ENCODE measurements at regions of chr17 and their contacts with region 1.

Region 1: DNA sequence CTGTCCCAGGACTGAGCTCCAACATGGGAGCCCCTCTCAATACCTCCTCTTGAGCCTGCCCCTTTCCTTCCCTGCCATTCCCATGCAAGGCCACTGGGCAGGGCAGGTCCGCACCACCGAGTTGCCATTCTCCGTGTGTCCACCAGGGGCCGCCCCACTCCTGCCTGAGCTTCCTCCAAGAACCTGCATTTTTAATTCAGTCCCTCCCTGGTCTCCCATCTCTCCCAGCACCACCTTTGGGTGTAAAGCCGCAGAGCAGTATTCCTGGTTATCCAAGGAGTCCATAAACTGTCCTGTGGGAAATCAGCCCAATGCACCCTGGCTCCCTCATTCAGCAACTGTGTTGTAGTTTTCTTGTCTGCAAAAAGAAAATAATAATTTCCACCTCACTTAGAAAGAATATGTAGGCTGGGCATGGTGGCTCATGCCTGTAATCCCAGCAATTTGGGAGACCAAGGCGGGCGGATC is 15.9 kb upstream of the ANKRD40CL start:
- DNase-seq: peak; percentile 31
- ATAC-seq: peak; percentile 98
- H3K4me3 ChIP-seq: no peak overlapping the region
- H3K27ac ChIP-seq: no peak overlapping the region
- H3K4me1 ChIP-seq: no peaks in the 10 kb centered on the region; the same call in 1 of the 2 replicates
- H3K27me3 ChIP-seq: no peaks in the 10 kb centered on the region
- CTCF ChIP-seq: peak; percentile 99 to 100 (median 99); a peak in 5 of 6 replicates
- EP300 ChIP-seq: no peak
- POLR2A ChIP-seq: no peak
- RAD21 ChIP-seq: peak; percentile 98

Region 2: GRCh38 chr17:50707289-50708049 is 75.8 kb before region 1 on chr17 and contains the start of gene ANKRD40:
- CTCF ChIA-PET with region 1: no interaction called
- POLR2A ChIA-PET with region 1: no interaction called
- RAD21 ChIA-PET with region 1: no interaction called
- SMC1A ChIA-PET with region 1: no interaction called
- in situ Hi-C with region 1: no loop called
- intact Hi-C with region 1: no loop called
- DNase-seq: peak; percentile 67
- ATAC-seq: peak; percentile 78
- H3K4me3 ChIP-seq: peak within 1 kb of the TSS; percentile 81
- H3K27ac ChIP-seq: peak within 1 kb of the TSS; percentile 86
- H3K4me1 ChIP-seq: peaks cover 9% of the 10 kb centered on the region
- H3K27me3 ChIP-seq: no peaks in the 10 kb centered on the region
- CTCF ChIP-seq: no peak
- EP300 ChIP-seq: 0 out of 4 replicates have a peak, but pooled peaks of 1 of the 2 experiments have one; percentile 9
- POLR2A ChIP-seq: peak; percentile 80
- RAD21 ChIP-seq: no peak
- polyA plus RNA-seq, gene ANKRD40: 6.7 to 6.9 TPM

Region 3: GRCh38 chr17:50765454-50766221 is 17.6 kb before region 1 on chr17:
- CTCF ChIA-PET with region 1: interaction called, 25 read pairs
- POLR2A ChIA-PET with region 1: interaction called, 3 read pairs
- RAD21 ChIA-PET with region 1: no interaction called
- SMC1A ChIA-PET with region 1: interaction called, 7 read pairs
- in situ Hi-C with region 1: no loop called
- intact Hi-C with region 1: no loop called
- DNase-seq: peak; percentile 37
- ATAC-seq: peak; percentile 81
- H3K4me3 ChIP-seq: no peak overlapping the region
- H3K27ac ChIP-seq: 0 out of 2 replicates have a peak overlapping the region, but pooled peaks have one; percentile 17
- H3K4me1 ChIP-seq: peaks cover 16% of the 10 kb centered on the region
- H3K27me3 ChIP-seq: no peaks in the 10 kb centered on the region
- CTCF ChIP-seq: no peak
- EP300 ChIP-seq: no peak
- POLR2A ChIP-seq: no peak
- RAD21 ChIP-seq: no peak

Region 4: GRCh38 chr17:50771991-50772785 is 11.0 kb before region 1 on chr17:
- CTCF ChIA-PET with region 1: interaction called, 14 read pairs
- POLR2A ChIA-PET with region 1: interaction called, 3 read pairs
- RAD21 ChIA-PET with region 1: no interaction called
- SMC1A ChIA-PET with region 1: interaction called, 7 read pairs
- in situ Hi-C with region 1: no loop called
- intact Hi-C with region 1: no loop called
- DNase-seq: no peak
- ATAC-seq: peak; percentile 34; the same call in 1 of the 3 replicates
- H3K4me3 ChIP-seq: no peak overlapping the region
- H3K27ac ChIP-seq: no peak overlapping the region
- H3K4me1 ChIP-seq: peaks cover 8% of the 10 kb centered on the region
- H3K27me3 ChIP-seq: no peaks in the 10 kb centered on the region
- CTCF ChIP-seq: no peak
- EP300 ChIP-seq: no peak
- POLR2A ChIP-seq: no peak
- RAD21 ChIP-seq: no peak

Region 5: DNA sequence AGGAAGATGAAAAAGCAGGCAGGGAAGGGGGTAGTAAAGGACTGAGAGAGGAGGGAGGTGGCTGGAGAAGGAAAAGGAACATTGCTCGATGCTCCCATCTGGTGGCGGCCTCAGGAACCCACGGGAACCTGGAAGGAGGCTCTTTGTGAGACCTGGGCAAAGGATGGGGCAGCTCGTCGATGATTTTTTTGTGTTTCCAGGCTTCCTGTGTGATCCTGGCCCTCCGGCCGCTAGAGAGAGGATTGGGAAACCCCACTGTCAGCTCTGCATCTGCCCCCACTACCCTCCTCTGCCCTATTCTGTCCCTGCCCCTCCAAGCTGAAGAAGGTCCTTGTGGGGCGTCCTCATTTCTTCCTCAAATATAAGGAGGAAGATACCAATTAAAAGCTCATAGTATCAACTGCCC is 58.7 kb after region 1 on chr17:
- CTCF ChIA-PET with region 1: interaction called, 84 read pairs
- POLR2A ChIA-PET with region 1: no interaction called
- RAD21 ChIA-PET with region 1: interaction called, 18 read pairs
- SMC1A ChIA-PET with region 1: interaction called, 17 read pairs
- in situ Hi-C with region 1: loop called (anchors 5 kb)
- intact Hi-C with region 1: loop called (anchors 1 kb)
- DNase-seq: no peak
- ATAC-seq: peak; percentile 90
- H3K4me3 ChIP-seq: no peak overlapping the region
- H3K27ac ChIP-seq: no peak overlapping the region
- H3K4me1 ChIP-seq: no peaks in the 10 kb centered on the region
- H3K27me3 ChIP-seq: no peaks in the 10 kb centered on the region; a peak in 2 of 4 replicates
- CTCF ChIP-seq: peak; percentile 74 to 88 (median 83); a peak in 5 of 6 replicates
- EP300 ChIP-seq: no peak
- POLR2A ChIP-seq: no peak
- RAD21 ChIP-seq: peak; percentile 85

Region 6: GRCh38 chr17:50949989-50950881 is 167.0 kb after region 1 on chr17:
- CTCF ChIA-PET with region 1: interaction called, 12 read pairs
- POLR2A ChIA-PET with region 1: no interaction called
- RAD21 ChIA-PET with region 1: interaction called, 4 read pairs
- SMC1A ChIA-PET with region 1: interaction called, 12 read pairs
- in situ Hi-C with region 1: loop called (anchors 10 kb)
- intact Hi-C with region 1: no loop called
- DNase-seq: no peak
- ATAC-seq: peak; percentile 95
- H3K4me3 ChIP-seq: no peak overlapping the region
- H3K27ac ChIP-seq: no peak overlapping the region
- H3K4me1 ChIP-seq: peaks cover 20% of the 10 kb centered on the region
- H3K27me3 ChIP-seq: no peaks in the 10 kb centered on the region
- CTCF ChIP-seq: peak; percentile 66 to 76 (median 66)
- EP300 ChIP-seq: no peak
- POLR2A ChIP-seq: no peak
- RAD21 ChIP-seq: peak; percentile 88

Region 7: GRCh38 chr17:50956750-50957523 is 173.7 kb after region 1 on chr17:
- CTCF ChIA-PET with region 1: interaction called, 12 read pairs
- POLR2A ChIA-PET with region 1: no interaction called
- RAD21 ChIA-PET with region 1: interaction called, 4 read pairs
- SMC1A ChIA-PET with region 1: no interaction called
- in situ Hi-C with region 1: loop called (anchors 10 kb)
- intact Hi-C with region 1: loop called (anchors 1 kb)
- DNase-seq: no peak
- ATAC-seq: peak; percentile 96
- H3K4me3 ChIP-seq: no peak overlapping the region
- H3K27ac ChIP-seq: no peak overlapping the region
- H3K4me1 ChIP-seq: peaks cover 11% of the 10 kb centered on the region
- H3K27me3 ChIP-seq: no peaks in the 10 kb centered on the region
- CTCF ChIP-seq: peak; percentile 73 to 80 (median 75)
- EP300 ChIP-seq: no peak
- POLR2A ChIP-seq: no peak
- RAD21 ChIP-seq: peak; percentile 71

Measured in GM12878 (cell line).